ENCODE measurements at regions of chr17 and their contacts with region 1.

Region 1: DNA sequence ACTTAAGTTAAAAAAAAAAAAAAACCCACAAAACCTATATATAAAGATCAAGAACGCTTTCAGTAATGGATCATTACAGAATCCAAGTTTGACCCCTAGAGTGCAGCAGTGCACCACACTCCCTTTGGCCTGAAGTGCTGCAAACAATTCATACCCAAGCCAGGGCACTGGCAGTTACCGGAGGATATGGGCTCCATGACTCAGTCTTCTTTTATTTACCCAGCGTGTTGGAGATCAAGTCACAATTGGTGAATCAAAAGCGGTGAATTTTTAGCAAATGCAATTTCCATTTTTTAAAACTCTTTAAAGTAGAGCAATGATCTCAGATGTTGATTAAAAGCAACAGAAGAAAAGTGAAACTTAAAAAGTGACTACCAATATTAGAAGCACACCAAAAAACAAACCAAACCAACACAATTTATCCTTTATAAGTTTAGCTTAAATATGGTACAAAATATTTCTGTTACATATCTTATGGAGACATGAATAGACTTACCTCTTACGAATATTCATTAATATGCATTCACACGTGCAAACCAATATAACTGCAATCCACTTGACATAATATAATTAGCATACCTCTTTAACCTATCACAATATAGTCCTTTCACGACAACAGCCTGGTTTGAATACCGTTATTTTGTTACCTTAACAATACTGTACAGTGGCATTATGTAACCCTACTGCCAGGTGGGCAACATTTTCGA is 46.3 kb downstream of the ZNF652 start:
- DNase-seq: peak; percentile 78
- CTCF ChIP-seq: peak; percentile 68

Region 2: DNA sequence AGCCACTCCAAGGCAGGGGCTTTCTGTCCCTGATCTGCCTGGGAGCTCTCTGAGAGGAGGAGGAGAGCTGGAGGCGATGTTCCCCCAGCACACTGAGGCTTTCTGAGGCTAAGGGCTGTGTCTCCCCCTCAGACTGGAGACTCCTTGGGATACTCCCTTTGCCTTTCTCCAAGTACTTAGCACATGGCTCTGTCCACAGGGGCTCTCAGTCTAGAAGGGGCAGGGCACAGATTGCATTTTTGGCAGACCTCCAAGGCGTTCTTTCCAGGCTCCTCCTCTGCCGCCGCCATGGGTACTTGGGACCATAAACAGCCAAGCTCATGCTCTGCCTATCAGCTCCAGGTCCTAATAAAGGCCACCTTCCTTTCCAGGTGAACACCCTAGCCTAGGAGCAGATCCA is 345.5 kb before region 1 on chr17:
- CTCF ChIA-PET with region 1: no interaction called
- POLR2A ChIA-PET with region 1: no interaction called
- DNase-seq: no peak
- CTCF ChIP-seq: no peak

Region 3: DNA sequence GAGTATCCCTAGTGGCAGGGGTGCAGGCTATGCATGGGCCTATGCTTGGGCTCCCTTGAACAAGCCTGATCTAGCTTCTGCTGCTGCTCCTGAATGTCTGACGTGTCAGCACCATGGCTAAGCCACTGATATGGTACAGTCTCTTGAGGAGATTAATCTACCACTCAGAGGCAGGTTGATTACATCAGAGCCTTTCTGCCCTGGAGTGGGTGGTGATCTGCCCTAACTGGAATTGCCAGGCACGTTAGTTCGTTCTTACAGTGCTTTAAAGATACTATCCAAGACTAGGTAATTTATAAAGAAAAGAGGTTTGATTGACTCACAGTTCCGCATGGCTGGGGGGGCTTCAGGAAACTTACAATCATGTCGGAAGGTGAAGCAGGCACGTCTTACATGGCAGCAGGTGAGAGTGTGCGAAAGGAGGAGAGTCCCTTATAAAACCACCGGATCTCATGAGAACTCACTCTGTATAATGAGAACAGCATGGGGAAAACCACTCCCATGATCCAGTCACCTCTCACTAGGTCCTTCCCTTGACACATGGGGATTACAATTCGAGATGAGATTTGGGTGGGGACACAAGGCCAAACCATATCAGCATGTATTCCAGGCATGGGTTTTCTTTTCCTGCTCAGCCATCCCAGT is 224.6 kb before region 1 on chr17:
- CTCF ChIA-PET with region 1: no interaction called
- POLR2A ChIA-PET with region 1: no interaction called
- DNase-seq: no peak
- CTCF ChIP-seq: no peak

Region 4: DNA sequence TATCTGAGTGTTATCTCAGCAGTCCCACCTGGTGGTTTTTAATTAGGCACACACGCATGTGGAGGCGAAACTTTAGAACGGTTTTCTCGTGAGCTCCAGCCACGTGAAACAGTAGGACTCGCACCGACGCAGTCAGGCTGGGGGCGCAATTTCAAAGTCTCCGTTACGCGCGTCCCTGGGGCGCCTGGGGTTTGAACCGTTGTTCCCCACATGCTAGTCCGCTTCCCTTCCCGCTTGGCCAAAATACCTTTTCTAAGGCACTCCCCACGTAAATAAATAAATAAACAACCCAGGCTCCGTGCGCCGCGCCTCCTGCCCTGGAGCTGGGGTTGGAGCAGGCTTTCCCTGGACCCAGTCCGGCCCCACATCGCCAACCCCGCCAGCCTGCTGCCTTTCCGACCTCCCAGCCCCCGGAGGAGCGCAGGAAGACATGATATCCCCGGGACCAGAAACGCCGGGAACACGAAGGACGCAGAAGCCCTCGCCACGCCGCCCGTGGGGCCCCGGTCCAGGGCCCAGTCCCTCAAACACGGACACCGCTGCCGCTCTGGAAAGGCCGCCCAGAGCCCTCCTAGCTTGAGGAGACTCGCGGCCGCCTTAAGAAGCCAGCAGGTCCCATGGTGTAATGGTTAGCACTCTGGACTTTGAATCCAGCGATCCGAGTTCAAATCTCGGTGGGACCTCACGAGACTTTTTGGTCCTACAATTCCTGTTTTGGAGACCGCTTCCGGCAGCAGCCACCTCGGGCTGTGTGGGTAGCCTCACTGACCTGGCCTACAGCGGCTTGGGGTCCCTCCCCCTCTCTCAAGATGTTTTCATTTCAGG is 123.6 kb before region 1 on chr17:
- CTCF ChIA-PET with region 1: no interaction called
- POLR2A ChIA-PET with region 1: no interaction called
- DNase-seq: peak; percentile 64
- CTCF ChIP-seq: peak; percentile 46

Region 5: DNA sequence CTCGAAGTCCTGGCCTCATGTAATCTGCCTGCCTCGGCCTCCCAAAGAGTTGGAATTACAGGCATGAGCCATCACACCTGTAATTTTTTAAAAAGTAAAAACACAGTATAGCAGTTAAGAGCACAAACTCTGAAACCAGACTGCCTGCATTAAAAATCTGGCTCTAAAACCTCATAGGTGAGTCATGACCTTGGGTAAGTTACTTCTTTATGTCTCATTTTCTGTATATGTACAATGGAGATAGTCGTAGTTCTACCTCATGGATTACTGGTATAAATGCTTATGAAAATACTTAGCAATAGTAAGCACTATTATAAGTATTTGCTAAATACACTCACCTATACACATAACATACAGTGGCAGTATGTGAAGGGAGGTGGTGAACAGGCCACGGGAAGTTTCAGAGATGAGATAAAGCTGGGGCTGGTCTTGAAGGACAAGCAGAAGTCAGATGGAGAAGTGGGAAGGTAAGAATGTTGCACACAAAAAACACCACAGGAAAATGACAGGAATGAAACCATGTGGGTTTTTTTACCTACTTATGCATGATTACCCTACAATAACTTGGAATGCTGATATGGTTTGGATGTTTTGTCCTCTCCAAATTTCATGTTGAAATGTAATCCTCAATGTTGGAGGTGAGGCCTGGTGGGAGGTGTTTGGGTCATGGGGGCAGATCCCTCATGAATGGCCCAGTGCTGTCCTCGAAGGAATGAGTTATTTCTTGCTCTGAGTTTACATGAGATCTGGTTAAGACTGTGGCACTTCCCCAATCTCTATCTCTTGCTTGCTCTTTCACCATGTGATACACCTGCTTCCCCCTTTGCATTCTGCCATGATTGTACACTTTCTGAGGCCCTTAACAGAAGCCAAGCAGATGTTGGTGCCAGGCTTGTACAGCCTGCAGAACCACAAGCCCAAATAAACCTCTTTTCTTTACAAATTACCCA is 12.4 kb after region 1 on chr17:
- CTCF ChIA-PET with region 1: interaction called, 13 read pairs
- POLR2A ChIA-PET with region 1: interaction called, 7 read pairs
- DNase-seq: peak; percentile 24
- CTCF ChIP-seq: no peak

Region 6: DNA sequence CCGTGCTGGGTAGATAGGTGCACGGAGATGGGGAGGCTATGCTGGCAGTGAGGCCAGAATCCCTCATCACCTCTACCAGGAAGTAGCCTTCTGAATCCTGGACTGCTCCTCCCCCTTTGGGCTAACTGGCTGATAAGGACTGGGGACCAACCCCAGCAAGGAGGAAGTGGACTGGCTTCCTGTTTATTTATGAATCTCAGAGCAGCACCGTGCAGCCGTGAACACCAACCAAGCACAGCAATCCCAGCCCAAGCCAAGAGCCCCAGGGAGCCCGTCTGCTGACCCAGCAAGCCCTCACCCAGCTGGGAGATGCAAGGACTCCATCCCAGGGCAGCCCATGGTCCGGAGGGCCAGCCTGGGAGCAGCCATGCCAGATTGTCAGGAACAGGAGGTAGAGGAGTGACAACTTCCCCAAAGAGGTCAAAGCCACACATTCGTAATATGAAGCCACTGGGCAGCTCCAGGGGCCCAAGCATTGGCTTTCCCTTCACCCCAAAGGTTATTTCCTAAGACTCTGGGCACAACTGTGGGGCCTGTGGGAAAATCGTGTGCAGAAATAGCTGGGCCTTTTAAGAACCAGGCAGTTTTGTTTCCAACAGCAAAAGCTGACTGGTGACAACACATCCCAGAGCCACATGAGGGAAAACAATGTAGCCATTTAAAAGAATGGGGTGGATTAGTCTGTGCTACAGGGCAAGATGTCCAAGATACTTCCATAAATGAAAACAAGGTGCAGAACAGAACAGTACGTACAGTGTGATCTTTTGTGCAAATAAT is 75.0 kb after region 1 on chr17:
- CTCF ChIA-PET with region 1: interaction called, 52 read pairs
- POLR2A ChIA-PET with region 1: no interaction called
- DNase-seq: peak; percentile 60
- CTCF ChIP-seq: no peak

Region 7: DNA sequence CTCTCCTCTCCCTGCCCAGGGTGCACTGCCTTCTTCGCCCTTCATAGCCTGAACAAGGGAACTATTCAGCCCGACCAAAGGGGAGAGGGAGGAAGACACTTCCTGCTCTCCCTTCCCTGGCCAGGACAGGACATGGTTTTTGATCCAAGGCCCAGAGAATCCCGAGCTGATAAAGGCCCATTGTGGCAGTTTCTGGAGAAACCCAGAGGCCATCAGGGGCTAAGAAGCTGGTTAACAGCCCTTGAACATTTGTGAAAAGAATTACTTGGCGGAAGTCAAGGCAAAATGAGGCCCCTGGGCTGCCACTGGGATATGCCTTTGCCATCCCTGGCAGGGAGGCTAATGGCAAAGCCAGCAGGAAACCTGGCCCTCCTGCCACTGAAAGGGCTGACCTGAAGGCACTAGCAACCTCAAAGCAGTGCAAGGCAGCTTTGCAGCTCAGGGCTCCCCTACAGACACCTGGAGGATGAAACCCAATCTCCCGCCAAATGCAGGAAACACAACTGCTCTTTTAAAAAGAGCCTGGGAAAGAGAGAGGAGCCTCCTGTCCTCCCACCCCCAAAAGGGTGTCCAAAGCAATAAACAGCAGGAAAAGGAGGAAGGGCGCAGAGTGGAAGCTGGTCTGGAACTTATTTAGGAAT is 86.4 kb after region 1 on chr17:
- CTCF ChIA-PET with region 1: interaction called, 51 read pairs
- POLR2A ChIA-PET with region 1: no interaction called
- DNase-seq: no peak
- CTCF ChIP-seq: no peak

Region 8: GRCh38 chr17:49407981-49408501 is 92.3 kb after region 1 on chr17:
- CTCF ChIA-PET with region 1: interaction called, 19 read pairs
- POLR2A ChIA-PET with region 1: no interaction called
- DNase-seq: peak; percentile 88
- CTCF ChIP-seq: peak; percentile 96

Measured in GM10248 (cell line).